Mammary epithelial cell (primary cell): ENCODE measurements at regions of chr5 and their contacts with region 1.

Region 1: GRCh38 chr5:142253938-142254337 is 70.9 kb downstream of the SPRY4 start:
- DNase-seq: no peak
- H3K4me3 ChIP-seq: no peak overlapping the region
- H3K27ac ChIP-seq: no peak overlapping the region
- H3K4me1 ChIP-seq: peaks cover 4% of the 10 kb centered on the region
- H3K27me3 ChIP-seq: no peaks in the 10 kb centered on the region
- CTCF ChIP-seq: no peak

Region 2: DNA sequence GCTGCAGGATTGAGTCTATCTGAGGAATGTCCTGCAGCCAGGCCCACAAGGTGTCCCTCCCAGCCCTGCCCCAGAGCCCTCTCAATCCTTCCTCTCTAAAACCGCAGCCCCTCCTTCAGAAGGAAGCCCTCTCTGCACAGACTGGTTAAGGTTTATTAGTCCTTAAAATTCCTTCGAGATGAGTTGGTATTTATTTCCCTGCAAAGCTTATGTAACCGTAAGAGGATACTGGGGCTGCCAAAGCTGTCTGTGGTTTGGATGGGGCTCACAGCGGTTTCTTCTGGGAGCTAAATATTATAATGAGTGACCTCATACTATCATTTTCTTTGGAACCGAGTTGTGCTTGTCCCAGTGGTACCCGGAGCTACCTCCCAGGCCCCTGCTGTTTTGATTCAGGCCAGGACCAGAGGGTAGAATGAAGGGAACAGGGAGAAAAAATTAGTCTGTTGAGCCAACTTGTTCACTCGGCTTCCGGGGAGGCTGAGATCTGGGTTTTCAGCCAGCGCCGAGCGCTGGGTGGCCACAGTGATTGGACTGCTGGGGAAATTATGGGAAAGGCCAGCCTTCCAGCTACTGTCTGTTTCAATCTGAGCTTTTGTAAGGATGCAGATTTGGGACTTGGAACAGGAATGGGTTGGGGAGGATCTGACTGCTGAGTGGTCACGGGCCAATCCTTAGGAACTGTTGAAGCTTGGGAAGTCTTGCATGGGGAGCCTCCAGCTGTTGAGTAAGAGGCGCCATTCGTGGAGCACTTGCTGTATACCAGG is 37.8 kb before region 1 on chr5:
- CTCF ChIA-PET with region 1: no interaction called
- dilution Hi-C with region 1: loop called (anchors 5 kb)
- in situ Hi-C with region 1: no loop called
- intact Hi-C with region 1: loop called (anchors 2 kb)
- DNase-seq: peak; percentile 95
- H3K4me3 ChIP-seq: peak overlapping the region in 2 of 3 experiments; percentile 3 to 5
- H3K27ac ChIP-seq: peak overlapping the region; percentile 58
- H3K4me1 ChIP-seq: peaks cover 25% of the 10 kb centered on the region
- H3K27me3 ChIP-seq: no peaks in the 10 kb centered on the region
- CTCF ChIP-seq: peak in 1 of 2 donors; percentile 3

Region 3: DNA sequence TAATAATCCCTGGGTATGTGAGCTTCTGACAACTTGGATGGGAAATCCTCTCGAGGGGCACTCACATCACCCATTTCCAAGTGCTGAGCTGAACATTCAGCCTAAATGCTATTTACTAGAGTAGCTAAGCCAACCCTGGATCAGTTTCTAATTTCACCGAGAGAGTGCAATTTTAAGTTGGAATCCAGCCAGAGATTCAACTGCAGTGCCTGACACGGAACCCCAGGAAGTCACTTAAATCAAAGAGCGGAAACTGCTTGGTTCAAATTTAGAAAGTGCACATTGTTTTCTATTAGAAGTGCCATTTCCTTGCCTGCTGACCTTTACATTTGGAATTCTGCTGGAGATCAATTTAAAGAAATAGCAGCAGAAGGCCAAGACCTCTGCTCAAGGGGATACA is 62.1 kb after region 1 on chr5:
- CTCF ChIA-PET with region 1: no interaction called
- dilution Hi-C with region 1: loop called (anchors 5 kb)
- in situ Hi-C with region 1: no loop called
- intact Hi-C with region 1: no loop called
- DNase-seq: no peak
- H3K4me3 ChIP-seq: no peak overlapping the region
- H3K27ac ChIP-seq: no peak overlapping the region
- H3K4me1 ChIP-seq: peaks cover 13% of the 10 kb centered on the region
- H3K27me3 ChIP-seq: no peaks in the 10 kb centered on the region
- CTCF ChIP-seq: no peak